ENCODE measurements at regions of chr3 and their contacts with region 1.

Region 1: DNA sequence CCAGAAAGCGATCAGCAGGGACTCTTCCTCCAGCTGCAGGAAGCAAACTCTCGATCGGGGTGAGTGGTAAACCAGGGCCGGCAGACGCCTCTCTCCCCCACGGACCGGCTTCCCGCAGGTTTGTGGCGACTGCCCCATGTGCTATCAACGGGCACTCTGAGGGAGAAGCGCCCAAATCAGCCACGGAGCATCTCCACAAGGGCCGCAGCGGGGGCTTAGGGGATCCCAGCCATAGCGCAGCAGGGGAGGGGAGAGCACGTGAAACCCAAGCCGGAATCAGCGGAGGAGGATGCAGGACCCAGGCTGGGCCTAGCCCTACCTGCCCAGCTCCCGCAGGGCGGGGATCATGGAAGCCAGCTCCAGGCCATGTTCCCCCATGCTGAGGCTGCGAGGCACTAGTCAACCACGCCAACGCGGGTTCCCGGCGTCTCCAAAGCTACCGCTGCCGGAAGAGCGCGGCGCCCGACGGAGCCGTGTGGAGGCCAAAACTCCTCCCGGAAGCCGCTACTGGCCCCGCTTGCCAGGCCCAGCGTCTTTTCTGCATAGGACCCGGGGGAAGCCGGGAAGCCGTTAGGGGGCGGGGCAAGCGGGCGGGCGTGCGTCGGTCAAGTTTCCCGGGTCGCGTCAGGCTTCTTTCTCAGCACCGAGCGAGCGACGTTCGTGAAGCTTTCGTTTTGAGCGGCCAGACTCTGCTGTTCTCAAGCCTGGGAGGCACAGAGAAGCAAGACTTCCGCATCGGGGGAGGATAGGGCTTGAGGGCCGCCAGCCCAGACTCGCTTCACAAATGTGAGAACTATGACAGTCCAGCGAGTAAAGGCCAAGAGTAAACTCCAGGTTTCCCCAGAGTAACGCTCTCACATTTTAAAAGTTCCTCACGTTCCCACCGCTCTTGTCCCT is at the start of gene ATR:
- DNase-seq: peak; percentile 89 to 96 (median 95)
- ATAC-seq: peak; percentile 96
- H3K4me3 ChIP-seq: peak within 1 kb of the TSS; percentile 97
- H3K4me3 Mint-ChIP-seq: peak within 1 kb of the TSS; percentile 93 to 99 (median 97)
- H3K27ac ChIP-seq: peak within 1 kb of the TSS; percentile 94
- H3K27ac Mint-ChIP-seq: peak within 1 kb of the TSS; percentile 96 to 99 (median 98)
- H3K4me1 ChIP-seq: peaks cover 25 to 26% of the 10 kb centered on the region in 2 donors
- H3K4me1 Mint-ChIP-seq: peaks cover 45 to 60% (median 54%) of the 10 kb centered on the region in 7 donors
- H3K27me3 ChIP-seq: no peaks in the 10 kb centered on the region
- H3K27me3 Mint-ChIP-seq: peaks cover 0 to 20% (median 0%) of the 10 kb centered on the region in 5 donors
- total RNA-seq, gene ATR: 31.3 to 48.3 (median 36.2) TPM

Region 2: DNA sequence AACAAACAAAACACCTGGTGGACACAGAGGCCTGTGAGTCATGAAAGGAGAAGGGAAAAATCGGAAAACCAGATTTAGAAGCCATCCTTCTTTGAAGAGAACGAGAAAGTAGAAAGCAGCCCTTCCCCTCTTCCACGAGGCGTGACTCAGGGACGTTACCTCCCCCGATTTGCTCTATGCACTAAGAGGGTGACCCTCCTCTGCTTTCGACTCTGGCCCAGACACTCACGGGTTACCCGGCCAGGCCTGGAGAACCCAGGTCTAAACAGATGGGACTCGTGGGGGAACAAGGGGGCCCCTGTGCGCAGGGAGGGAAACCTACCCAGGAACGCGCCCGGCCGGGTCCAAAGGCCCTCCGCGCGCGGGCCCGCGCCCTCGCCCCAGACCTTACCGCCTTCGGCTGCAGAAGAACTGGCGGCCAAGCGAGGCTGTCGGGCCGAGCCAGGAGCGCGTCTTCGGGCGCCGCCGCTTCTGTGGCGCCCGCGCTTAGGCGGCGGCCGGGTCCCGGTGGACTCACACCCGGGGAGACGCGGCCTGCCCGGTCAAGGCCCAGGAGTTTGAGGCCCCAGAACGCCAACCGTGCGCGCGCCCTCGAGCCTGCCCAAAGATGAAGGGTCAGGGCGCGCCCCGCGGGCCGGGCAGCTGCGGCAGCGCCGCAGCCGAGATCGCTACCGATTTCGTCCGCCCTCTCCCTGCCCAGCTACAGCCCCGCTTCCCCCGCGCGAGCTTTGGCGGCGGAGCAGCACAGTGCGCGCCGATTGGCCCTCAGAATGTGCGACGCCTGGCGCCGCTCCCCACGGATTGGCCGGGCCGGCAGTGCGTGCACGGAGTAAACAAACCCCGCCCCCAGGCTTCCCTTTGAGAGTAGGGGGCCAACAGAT is 429.5 kb before region 1 on chr3 and contains the start of gene TFDP2:
- CTCF ChIA-PET with region 1: no interaction called
- POLR2A ChIA-PET with region 1: no interaction called
- intact Hi-C with region 1: loop called (anchors 1 to 5 kb)
- DNase-seq: peak; percentile 77 to 88 (median 86)
- ATAC-seq: peak; percentile 99
- H3K4me3 ChIP-seq: peak within 1 kb of the TSS; percentile 81
- H3K4me3 Mint-ChIP-seq: peak within 1 kb of the TSS; percentile 85 to 96 (median 92)
- H3K27ac ChIP-seq: peak within 1 kb of the TSS; percentile 78
- H3K27ac Mint-ChIP-seq: peak within 1 kb of the TSS; percentile 57 to 95 (median 87)
- H3K4me1 ChIP-seq: peaks cover 0 to 13% of the 10 kb centered on the region in 2 donors
- H3K4me1 Mint-ChIP-seq: peaks cover 24 to 41% (median 32%) of the 10 kb centered on the region in 7 donors
- H3K27me3 ChIP-seq: no peaks in the 10 kb centered on the region
- H3K27me3 Mint-ChIP-seq: peaks cover 0 to 16% (median 0%) of the 10 kb centered on the region in 5 donors
- total RNA-seq, gene TFDP2: 23.7 to 44.7 (median 41.0) TPM

Region 3: GRCh38 chr3:142447852-142448823 is 130.4 kb before region 1 on chr3 and contains the start of gene XRN1:
- CTCF ChIA-PET with region 1: no interaction called
- POLR2A ChIA-PET with region 1: interaction called, 7 read pairs
- intact Hi-C with region 1: loop called (anchors 1 kb)
- DNase-seq: peak; percentile 90 to 97 (median 94)
- ATAC-seq: peak; percentile 99
- H3K4me3 ChIP-seq: peak within 1 kb of the TSS; percentile 78
- H3K4me3 Mint-ChIP-seq: peak within 1 kb of the TSS; percentile 89 to 100 (median 98)
- H3K27ac ChIP-seq: peak within 1 kb of the TSS; percentile 99
- H3K27ac Mint-ChIP-seq: peak within 1 kb of the TSS; percentile 98 to 100 (median 99)
- H3K4me1 ChIP-seq: peaks cover 31% of the 10 kb centered on the region in 2 donors
- H3K4me1 Mint-ChIP-seq: peaks cover 26 to 55% (median 51%) of the 10 kb centered on the region in 7 donors
- H3K27me3 ChIP-seq: no peaks in the 10 kb centered on the region
- H3K27me3 Mint-ChIP-seq: no peaks in the 10 kb centered on the region
- total RNA-seq, gene XRN1: 86.1 to 123 (median 103) TPM

Region 4: GRCh38 chr3:142595951-142596725 is 17.6 kb after region 1 on chr3 and contains the start of gene PLS1:
- CTCF ChIA-PET with region 1: no interaction called
- POLR2A ChIA-PET with region 1: interaction called, 30 read pairs
- intact Hi-C with region 1: loop called (anchors 1 kb)
- DNase-seq: peak; percentile 74 to 97 (median 85)
- ATAC-seq: peak; percentile 91
- H3K4me3 ChIP-seq: peak within 1 kb of the TSS; percentile 82
- H3K4me3 Mint-ChIP-seq: peak within 1 kb of the TSS; percentile 96 to 100 (median 98)
- H3K27ac ChIP-seq: peak within 1 kb of the TSS; percentile 67
- H3K27ac Mint-ChIP-seq: peak within 1 kb of the TSS; percentile 83 to 95 (median 91)
- H3K4me1 ChIP-seq: peaks cover 0 to 3% of the 10 kb centered on the region in 2 donors
- H3K4me1 Mint-ChIP-seq: peaks cover 0 to 32% (median 20%) of the 10 kb centered on the region in 7 donors
- H3K27me3 ChIP-seq: no peaks in the 10 kb centered on the region
- H3K27me3 Mint-ChIP-seq: peaks cover 0 to 11% (median 0%) of the 10 kb centered on the region in 5 donors
- total RNA-seq, gene PLS1: 1.6 to 2.8 (median 2.0) TPM

Region 5: DNA sequence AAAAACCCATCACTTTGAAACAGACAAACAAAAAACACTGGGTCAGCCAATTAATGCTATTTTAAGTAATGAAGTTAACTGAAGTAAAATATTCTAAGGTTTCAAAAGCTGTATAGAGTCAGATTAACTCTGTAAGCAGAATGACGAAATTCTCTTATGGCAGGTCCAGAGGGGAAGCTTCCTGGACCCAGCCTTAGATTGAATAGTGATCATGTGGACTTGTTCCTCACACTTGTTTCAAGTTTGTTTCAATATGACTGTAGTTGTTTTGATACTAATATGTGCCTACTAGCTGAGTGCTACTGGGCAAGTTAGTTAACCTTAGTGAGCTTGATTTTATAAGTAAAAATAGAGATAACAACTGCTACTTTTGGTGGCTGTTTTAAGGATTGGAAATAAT is 50.2 kb after region 1 on chr3:
- CTCF ChIA-PET with region 1: no interaction called
- POLR2A ChIA-PET with region 1: no interaction called
- intact Hi-C with region 1: no loop called
- DNase-seq: no peak
- ATAC-seq: no peak
- H3K4me3 ChIP-seq: no peak overlapping the region
- H3K4me3 Mint-ChIP-seq: no peak overlapping the region
- H3K27ac ChIP-seq: no peak overlapping the region
- H3K27ac Mint-ChIP-seq: no peak overlapping the region
- H3K4me1 ChIP-seq: no peaks in the 10 kb centered on the region
- H3K4me1 Mint-ChIP-seq: peaks cover 0 to 6% (median 0%) of the 10 kb centered on the region in 7 donors
- H3K27me3 ChIP-seq: no peaks in the 10 kb centered on the region
- H3K27me3 Mint-ChIP-seq: peaks cover 0 to 2% (median 0%) of the 10 kb centered on the region in 5 donors

Region 6: GRCh38 chr3:143674100-143674968 is 1095.8 kb after region 1 on chr3:
- CTCF ChIA-PET with region 1: no interaction called
- POLR2A ChIA-PET with region 1: no interaction called
- intact Hi-C with region 1: no loop called
- DNase-seq: peak; percentile 40 to 86 (median 73)
- ATAC-seq: peak; percentile 96
- H3K4me3 ChIP-seq: no peak overlapping the region
- H3K4me3 Mint-ChIP-seq: peak overlapping the region in 9 of 10 donors; percentile 7 to 73 (median 45)
- H3K27ac ChIP-seq: no peak overlapping the region
- H3K27ac Mint-ChIP-seq: peak overlapping the region in 6 of 9 donors; percentile 14 to 86 (median 57)
- H3K4me1 ChIP-seq: peaks cover 0 to 6% of the 10 kb centered on the region in 2 donors
- H3K4me1 Mint-ChIP-seq: peaks cover 7 to 17% (median 9%) of the 10 kb centered on the region in 7 donors
- H3K27me3 ChIP-seq: no peaks in the 10 kb centered on the region
- H3K27me3 Mint-ChIP-seq: no peaks in the 10 kb centered on the region

Region 7: DNA sequence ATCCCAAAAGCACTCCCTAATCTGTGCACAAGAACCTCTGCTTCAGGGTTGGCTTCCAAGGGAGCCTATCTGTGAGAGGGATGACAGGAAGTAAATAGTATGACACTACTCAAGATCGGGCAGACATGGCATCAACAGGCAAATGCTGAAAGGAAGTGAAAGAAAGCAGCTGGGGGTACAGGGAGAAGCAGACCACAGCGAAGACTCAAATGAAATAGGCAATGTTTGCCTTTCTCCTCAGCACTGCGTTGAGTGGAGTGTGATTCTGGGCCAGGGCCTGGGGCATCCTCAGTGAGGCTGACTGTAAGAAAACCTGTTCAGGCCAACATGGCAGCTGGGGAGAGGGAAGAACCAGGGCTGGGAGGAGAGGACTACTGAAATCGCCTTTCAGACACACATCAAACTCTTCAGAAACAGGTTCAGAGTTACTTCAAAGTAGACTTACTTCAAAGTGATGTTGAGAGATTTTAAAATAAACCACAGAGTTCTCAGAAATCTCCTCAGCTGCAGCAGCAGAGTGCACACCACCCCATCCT is 1173.1 kb after region 1 on chr3:
- CTCF ChIA-PET with region 1: no interaction called
- POLR2A ChIA-PET with region 1: no interaction called
- intact Hi-C with region 1: loop called in 1 of 2 experiments (anchors 5 kb)
- DNase-seq: peak; percentile 12 to 83 (median 75)
- ATAC-seq: peak; percentile 80
- H3K4me3 ChIP-seq: peak overlapping the region; percentile 42
- H3K4me3 Mint-ChIP-seq: peak overlapping the region; percentile 67 to 89 (median 78)
- H3K27ac ChIP-seq: peak overlapping the region; percentile 63
- H3K27ac Mint-ChIP-seq: peak overlapping the region; percentile 88 to 100 (median 94)
- H3K4me1 ChIP-seq: peaks cover 16 to 35% of the 10 kb centered on the region in 2 donors
- H3K4me1 Mint-ChIP-seq: peaks cover 20 to 71% (median 68%) of the 10 kb centered on the region in 7 donors
- H3K27me3 ChIP-seq: no peaks in the 10 kb centered on the region
- H3K27me3 Mint-ChIP-seq: no peaks in the 10 kb centered on the region

Measured in naive thymus-derived CD4-positive, alpha-beta T cell (primary cell).